Activated CD4-positive, alpha-beta T cell treated with anti-CD3 and anti-CD28 coated beads, Interleukin-2, amount 10 ng/mL, durations not matched to agents 24 days and 14 days (primary cell): ENCODE measurements at regions of chr11 and their contacts with region 1.

Region 1: GRCh38 chr11:61477727-61478148 is 30.8 kb upstream of the LRRC10B start:
- DNase-seq: peak; percentile 85
- H3K4me3 Mint-ChIP-seq: no peak overlapping the region
- H3K27ac Mint-ChIP-seq: no peak overlapping the region
- H3K4me1 Mint-ChIP-seq: peaks cover 9% of the 10 kb centered on the region
- H3K27me3 Mint-ChIP-seq: no peaks in the 10 kb centered on the region

Region 2: GRCh38 chr11:61516675-61517572 is 39.2 kb after region 1 on chr11:
- intact Hi-C with region 1: loop called (anchors 1 kb)
- DNase-seq: peak; percentile 88
- H3K4me3 Mint-ChIP-seq: peak overlapping the region; percentile 51
- H3K27ac Mint-ChIP-seq: no peak overlapping the region
- H3K4me1 Mint-ChIP-seq: peaks cover 5% of the 10 kb centered on the region
- H3K27me3 Mint-ChIP-seq: peaks cover 13% of the 10 kb centered on the region

Region 3: GRCh38 chr11:61639816-61640443 is 162.2 kb after region 1 on chr11:
- intact Hi-C with region 1: loop called (anchors 10 kb)
- DNase-seq: no peak
- H3K4me3 Mint-ChIP-seq: no peak overlapping the region
- H3K27ac Mint-ChIP-seq: no peak overlapping the region
- H3K4me1 Mint-ChIP-seq: no peaks in the 10 kb centered on the region
- H3K27me3 Mint-ChIP-seq: peaks cover 3% of the 10 kb centered on the region